Activated CD8-positive, alpha-beta T cell treated with anti-CD3 and anti-CD28 coated beads for 36 hours (primary cell): ENCODE measurements at regions of chr3 and their contacts with region 1.

Region 1: DNA sequence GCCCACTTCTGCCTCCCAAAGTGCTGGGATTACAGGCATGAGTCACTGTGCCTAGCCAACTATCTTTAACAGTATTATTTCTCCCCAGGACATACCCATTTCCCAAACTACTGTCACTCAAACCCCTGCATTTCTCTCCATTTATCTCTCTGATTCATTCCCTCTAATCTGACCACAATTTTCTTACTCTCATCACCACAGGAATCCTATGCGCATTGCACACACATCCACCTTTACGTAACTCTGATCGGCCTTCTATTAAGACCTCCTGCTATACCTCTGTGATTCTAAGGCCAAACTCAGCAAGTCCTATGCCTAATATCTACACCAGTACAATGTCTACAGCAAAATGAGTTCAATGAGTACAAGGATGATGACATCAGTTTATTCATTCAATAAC is 235.0 kb downstream of the ULK4 start:
- DNase-seq: no peak
- ATAC-seq: no peak
- H3K4me3 Mint-ChIP-seq: no peak overlapping the region
- H3K27ac Mint-ChIP-seq: no peak overlapping the region
- H3K4me1 Mint-ChIP-seq: no peaks in the 10 kb centered on the region
- H3K27me3 Mint-ChIP-seq: no peaks in the 10 kb centered on the region
- CTCF ChIP-seq: no peak

Region 2: DNA sequence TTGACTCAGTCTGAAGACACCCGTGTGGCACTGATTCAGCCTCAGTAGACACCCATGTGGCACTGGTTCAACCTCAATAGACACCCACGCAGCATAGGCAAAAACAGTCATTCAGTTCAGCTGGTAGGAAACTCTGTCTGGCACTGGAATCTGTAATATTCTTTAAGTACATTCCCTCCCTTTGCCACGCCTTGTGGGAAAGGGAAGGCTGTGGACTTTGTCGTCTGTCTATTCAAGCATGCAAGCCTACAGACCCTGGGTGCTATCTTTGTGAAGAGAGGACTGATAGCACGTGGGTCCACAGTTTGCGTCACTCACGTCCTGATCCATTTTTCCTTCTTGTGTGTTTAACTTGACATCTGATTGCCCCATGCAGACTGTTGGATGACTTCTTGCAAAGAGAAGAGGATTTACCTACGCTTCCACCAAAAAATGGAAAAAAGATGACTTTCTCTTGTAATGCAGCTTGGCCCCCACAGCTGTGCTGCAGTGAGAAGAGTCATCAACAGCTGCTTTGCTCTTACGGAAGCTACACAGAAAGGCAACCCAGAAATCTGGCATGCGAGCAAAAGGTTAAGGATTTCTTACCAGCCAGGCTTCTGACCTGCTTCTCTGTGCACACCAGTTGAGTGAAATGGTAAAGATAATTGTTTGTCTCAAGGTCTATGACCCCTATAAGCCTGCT is 43.1 kb before region 1 on chr3:
- CTCF ChIA-PET with region 1: no interaction called
- POLR2A ChIA-PET with region 1: no interaction called
- intact Hi-C with region 1: no loop called
- DNase-seq: no peak
- ATAC-seq: no peak
- H3K4me3 Mint-ChIP-seq: no peak overlapping the region
- H3K27ac Mint-ChIP-seq: no peak overlapping the region
- H3K4me1 Mint-ChIP-seq: no peaks in the 10 kb centered on the region
- H3K27me3 Mint-ChIP-seq: no peaks in the 10 kb centered on the region
- CTCF ChIP-seq: no peak

Region 3: GRCh38 chr3:41742127-41742526 is 15.2 kb after region 1 on chr3:
- CTCF ChIA-PET with region 1: no interaction called
- POLR2A ChIA-PET with region 1: no interaction called
- intact Hi-C with region 1: no loop called
- DNase-seq: no peak
- ATAC-seq: no peak
- H3K4me3 Mint-ChIP-seq: no peak overlapping the region
- H3K27ac Mint-ChIP-seq: no peak overlapping the region
- H3K4me1 Mint-ChIP-seq: no peaks in the 10 kb centered on the region
- H3K27me3 Mint-ChIP-seq: no peaks in the 10 kb centered on the region
- CTCF ChIP-seq: no peak

Region 4: GRCh38 chr3:42071904-42072592 is 345.2 kb after region 1 on chr3:
- CTCF ChIA-PET with region 1: no interaction called
- POLR2A ChIA-PET with region 1: no interaction called
- intact Hi-C with region 1: loop called (anchors 10 kb)
- DNase-seq: no peak
- ATAC-seq: no peak
- H3K4me3 Mint-ChIP-seq: no peak overlapping the region
- H3K27ac Mint-ChIP-seq: no peak overlapping the region
- H3K4me1 Mint-ChIP-seq: peaks cover 24% of the 10 kb centered on the region
- H3K27me3 Mint-ChIP-seq: no peaks in the 10 kb centered on the region
- CTCF ChIP-seq: no peak

Region 5: DNA sequence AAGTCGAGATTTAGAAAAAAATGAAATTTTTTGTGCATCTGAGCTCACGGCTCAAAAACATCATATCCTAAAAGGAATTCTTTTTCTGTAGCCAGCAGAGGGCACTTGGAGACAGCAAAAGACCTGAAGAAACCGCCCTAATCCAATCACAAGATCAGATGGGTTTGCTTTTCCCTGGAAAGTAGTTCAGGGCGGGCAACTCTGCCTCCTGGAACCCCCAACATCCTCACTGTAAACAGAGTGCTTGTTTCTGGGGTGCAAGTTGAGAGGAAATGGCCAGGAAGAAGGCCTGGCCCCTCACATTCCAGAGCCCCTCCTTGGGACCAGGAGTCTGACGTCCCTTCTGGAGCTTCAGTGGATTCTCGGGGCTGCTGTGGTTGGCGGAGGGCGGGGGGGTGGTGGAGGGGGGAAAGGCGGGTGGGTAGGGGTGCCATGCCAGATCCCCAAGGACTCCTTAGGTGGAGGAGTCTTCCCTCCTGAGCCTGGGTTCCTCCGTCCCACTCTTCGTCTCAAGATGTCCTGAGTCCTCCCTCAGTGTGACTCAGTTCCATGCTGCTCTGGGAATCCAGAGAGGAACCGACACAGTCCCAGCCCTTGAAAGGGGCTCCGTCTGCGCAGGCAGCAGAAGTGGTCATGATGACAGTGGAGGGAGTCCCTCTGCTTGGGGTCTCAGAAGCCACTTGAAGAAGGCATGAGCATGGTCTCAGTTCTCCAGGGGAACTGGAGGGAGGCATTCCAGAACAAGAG is 503.2 kb after region 1 on chr3:
- CTCF ChIA-PET with region 1: no interaction called
- POLR2A ChIA-PET with region 1: no interaction called
- intact Hi-C with region 1: no loop called
- DNase-seq: no peak
- ATAC-seq: no peak
- H3K4me3 Mint-ChIP-seq: no peak overlapping the region
- H3K27ac Mint-ChIP-seq: no peak overlapping the region
- H3K4me1 Mint-ChIP-seq: no peaks in the 10 kb centered on the region
- H3K27me3 Mint-ChIP-seq: peaks cover 2% of the 10 kb centered on the region
- CTCF ChIP-seq: peak; percentile 21